ENCODE measurements at regions of chr9 and their contacts with region 1.

Region 1: DNA sequence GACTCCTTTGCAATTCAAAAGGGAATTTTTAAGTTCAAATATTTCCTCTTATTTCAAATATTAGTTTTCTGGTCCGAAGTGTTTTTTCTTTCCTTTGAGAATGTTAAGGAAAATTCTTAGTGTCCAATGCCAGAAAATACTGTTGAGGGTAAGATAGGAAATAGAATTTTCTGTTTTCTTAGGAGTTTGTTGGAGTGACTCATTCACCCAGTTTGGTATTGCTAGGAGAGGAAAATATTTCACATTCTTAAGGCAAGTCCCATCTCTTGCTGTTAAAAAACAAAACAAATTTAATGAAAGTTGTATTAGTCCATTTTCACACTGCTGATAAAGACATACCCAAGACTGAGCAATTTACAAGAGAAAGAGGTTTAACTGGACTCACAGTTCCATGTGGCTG is 349.2 kb upstream of the ADAMTSL1 start:
- DNase-seq: no peak
- H3K4me3 ChIP-seq: no peak overlapping the region
- H3K27ac ChIP-seq: no peak overlapping the region
- H3K4me1 ChIP-seq: no peaks in the 10 kb centered on the region
- H3K27me3 ChIP-seq: no peaks in the 10 kb centered on the region
- CTCF ChIP-seq: no peak

Region 2: GRCh38 chr9:18189871-18190670 is 65.3 kb after region 1 on chr9:
- CTCF ChIA-PET with region 1: no interaction called
- dilution Hi-C with region 1: loop called (anchors 5 kb)
- in situ Hi-C with region 1: no loop called
- intact Hi-C with region 1: no loop called
- DNase-seq: no peak
- H3K4me3 ChIP-seq: no peak overlapping the region
- H3K27ac ChIP-seq: no peak overlapping the region
- H3K4me1 ChIP-seq: no peaks in the 10 kb centered on the region
- H3K27me3 ChIP-seq: no peaks in the 10 kb centered on the region
- CTCF ChIP-seq: no peak